ENCODE measurements at regions of chr5 and their contacts with region 1.

Region 1: DNA sequence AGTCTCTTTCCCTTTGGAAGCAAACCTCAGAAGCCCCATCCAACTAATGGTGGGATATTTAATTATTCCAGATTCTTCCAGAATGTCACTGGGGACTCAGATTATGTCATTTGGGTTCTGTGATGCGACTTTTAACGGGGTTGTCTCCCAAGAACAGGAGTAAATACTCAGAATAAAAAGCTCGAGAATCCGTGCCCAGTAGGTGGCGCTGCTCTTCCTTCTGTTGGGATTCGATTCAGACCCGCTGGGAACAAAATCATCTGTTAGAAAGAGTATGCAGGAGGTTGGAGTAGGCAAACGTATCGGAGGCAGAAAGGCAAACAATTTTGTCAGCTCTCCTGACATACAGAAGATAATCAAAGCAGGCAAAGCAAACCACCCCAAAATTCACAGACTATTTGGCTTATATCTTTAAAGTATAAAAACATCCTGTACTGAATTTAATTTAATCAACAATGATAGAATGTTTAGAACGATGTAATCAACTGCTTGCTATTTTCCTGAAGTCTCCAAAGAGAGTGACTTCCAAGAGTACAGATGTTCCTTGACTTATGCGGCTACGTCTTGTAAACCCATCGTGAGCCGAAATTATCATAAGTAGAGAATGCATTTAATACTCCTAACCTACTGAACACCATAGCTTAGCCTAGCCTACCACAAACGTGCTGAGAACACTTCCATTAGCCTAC is 169.8 kb upstream of the RAI14 start:
- DNase-seq: peak; percentile 78
- H3K4me3 Mint-ChIP-seq: no peak overlapping the region
- H3K27ac Mint-ChIP-seq: no peak overlapping the region
- H3K4me1 Mint-ChIP-seq: peaks cover 8% of the 10 kb centered on the region
- H3K27me3 Mint-ChIP-seq: peaks cover 39% of the 10 kb centered on the region

Region 2: DNA sequence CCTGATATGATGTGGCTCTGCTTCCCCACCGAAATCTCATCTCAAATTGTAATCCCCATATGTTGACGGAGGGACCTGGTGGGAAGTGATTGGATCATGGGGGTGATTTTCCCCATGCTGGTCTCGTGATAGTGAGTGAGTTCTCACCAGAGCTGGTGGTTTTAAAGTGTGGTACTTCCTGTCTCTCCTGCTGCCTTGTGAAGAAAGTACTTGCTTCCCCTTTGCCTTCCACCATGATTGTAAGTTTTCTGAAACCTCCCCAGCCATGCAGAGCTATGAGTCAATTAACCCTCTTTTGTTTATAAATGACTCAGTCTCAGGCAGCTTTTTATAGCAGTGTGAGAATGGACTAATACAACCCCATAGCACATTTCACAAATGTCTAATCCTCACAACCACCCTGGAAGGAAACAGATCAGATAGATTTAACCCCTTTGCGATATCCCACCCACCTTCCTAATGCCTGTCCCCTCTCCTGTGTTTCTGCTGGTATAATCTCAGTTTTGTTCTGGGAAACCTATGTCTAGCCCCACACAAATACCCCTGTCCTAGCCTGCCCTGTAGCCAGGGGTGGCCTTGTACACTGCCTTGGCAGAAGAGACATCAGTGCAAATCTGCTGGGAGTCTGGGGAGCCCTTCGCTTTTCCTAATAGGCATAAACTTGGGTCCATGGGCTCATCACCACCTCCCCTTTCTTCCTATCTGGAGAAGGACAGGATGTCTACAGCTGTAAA is 12.9 kb after region 1 on chr5:
- CTCF ChIA-PET with region 1: interaction called, 37 read pairs
- POLR2A ChIA-PET with region 1: no interaction called
- intact Hi-C with region 1: loop called (anchors 2 kb)
- DNase-seq: peak; percentile 45
- H3K4me3 Mint-ChIP-seq: peak overlapping the region; percentile 17
- H3K27ac Mint-ChIP-seq: peak overlapping the region; percentile 49
- H3K4me1 Mint-ChIP-seq: peaks cover 13% of the 10 kb centered on the region
- H3K27me3 Mint-ChIP-seq: peaks cover 23% of the 10 kb centered on the region

Region 3: DNA sequence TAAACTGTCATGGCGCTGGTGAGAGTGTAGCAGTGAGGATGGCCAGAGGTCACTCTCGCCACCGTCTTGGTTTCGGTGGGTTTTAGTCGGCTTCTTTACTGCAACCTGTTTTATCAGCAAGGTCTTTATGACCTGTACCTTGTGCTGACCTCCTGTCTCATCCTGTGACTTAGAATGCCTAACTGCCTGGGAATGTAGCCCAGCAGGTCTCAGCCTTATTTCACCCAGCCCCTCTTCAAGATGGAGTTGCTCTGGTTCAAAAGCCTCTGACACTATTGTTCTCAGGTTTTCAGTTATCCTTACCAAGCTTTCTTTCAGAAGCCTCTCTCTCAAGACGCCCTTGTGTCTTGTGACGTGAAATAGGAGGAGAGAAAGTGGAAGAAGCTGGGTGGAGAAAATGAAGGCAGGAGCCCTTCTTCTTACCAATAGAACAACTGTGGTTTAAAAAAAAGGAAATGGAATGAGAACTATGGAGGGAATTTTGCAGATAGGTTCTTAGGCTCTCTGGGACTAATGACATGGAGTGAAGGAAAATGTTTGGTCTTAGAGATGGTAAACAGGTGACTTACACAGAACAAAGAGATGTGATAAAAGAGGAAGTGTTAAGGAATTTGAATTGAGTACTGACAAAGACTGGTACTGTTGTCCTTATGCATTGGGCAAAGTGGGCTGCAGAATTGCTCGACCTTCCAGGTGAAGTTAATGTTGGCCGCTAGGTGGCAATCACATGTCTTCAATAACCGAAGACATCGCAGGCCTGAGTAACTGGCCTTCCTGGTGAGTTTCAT is 36.5 kb after region 1 on chr5:
- CTCF ChIA-PET with region 1: interaction called, 21 read pairs
- POLR2A ChIA-PET with region 1: no interaction called
- intact Hi-C with region 1: no loop called
- DNase-seq: peak; percentile 60
- H3K4me3 Mint-ChIP-seq: no peak overlapping the region
- H3K27ac Mint-ChIP-seq: no peak overlapping the region
- H3K4me1 Mint-ChIP-seq: peaks cover 4% of the 10 kb centered on the region
- H3K27me3 Mint-ChIP-seq: peaks cover 4% of the 10 kb centered on the region

Region 4: GRCh38 chr5:34838785-34839714 is 352.7 kb after region 1 on chr5 and contains the start of gene TTC23L:
- CTCF ChIA-PET with region 1: interaction called, 4 read pairs
- POLR2A ChIA-PET with region 1: no interaction called
- intact Hi-C with region 1: loop called (anchors 10 kb)
- DNase-seq: peak; percentile 93
- H3K4me3 Mint-ChIP-seq: peak within 1 kb of the TSS; percentile 90
- H3K27ac Mint-ChIP-seq: peak within 1 kb of the TSS; percentile 68
- H3K4me1 Mint-ChIP-seq: peaks cover 9% of the 10 kb centered on the region
- H3K27me3 Mint-ChIP-seq: no peaks in the 10 kb centered on the region
- total RNA-seq, gene TTC23L: 0.07 TPM in 1 of 2 experiments, not detected in the other

Region 5: DNA sequence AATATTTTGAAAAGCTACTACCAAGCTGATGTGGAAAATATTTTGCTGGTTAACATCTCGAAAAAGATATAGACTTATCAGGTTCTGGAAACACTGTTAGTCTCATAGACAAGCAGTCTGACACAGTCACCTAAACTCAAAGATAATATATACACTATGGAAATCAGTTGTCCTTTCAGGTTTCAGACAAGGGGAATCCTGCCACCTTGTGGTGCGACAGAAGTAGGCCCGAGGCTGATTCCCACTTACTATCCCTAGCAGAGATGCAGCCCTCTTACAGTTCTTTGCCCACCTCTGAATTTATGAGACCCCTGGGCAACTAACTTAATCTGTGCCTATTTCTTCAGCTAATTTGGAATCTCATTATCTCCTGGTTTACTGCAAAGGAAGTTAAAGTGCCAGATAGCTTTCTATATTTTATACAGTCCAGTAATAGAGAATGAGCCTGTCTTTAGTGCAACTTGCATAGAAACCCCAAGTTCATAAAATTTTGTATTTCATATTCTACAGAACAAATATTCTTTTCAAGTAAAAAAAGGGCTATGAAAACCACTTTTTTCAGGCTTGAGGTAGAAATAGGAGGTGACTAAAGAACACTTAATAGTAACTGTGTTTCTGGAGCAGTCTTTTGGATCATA is 412.1 kb after region 1 on chr5:
- CTCF ChIA-PET with region 1: interaction called, 48 read pairs
- POLR2A ChIA-PET with region 1: no interaction called
- intact Hi-C with region 1: loop called (anchors 1 kb)
- DNase-seq: peak; percentile 67
- H3K4me3 Mint-ChIP-seq: no peak overlapping the region
- H3K27ac Mint-ChIP-seq: no peak overlapping the region
- H3K4me1 Mint-ChIP-seq: no peaks in the 10 kb centered on the region
- H3K27me3 Mint-ChIP-seq: no peaks in the 10 kb centered on the region

Measured in activated CD4-positive, alpha-beta memory T cell treated with anti-CD3 and anti-CD28 coated beads for 36 hours (primary cell).